ENCODE measurements at regions of chr1 and their contacts with region 1.

Region 1: DNA sequence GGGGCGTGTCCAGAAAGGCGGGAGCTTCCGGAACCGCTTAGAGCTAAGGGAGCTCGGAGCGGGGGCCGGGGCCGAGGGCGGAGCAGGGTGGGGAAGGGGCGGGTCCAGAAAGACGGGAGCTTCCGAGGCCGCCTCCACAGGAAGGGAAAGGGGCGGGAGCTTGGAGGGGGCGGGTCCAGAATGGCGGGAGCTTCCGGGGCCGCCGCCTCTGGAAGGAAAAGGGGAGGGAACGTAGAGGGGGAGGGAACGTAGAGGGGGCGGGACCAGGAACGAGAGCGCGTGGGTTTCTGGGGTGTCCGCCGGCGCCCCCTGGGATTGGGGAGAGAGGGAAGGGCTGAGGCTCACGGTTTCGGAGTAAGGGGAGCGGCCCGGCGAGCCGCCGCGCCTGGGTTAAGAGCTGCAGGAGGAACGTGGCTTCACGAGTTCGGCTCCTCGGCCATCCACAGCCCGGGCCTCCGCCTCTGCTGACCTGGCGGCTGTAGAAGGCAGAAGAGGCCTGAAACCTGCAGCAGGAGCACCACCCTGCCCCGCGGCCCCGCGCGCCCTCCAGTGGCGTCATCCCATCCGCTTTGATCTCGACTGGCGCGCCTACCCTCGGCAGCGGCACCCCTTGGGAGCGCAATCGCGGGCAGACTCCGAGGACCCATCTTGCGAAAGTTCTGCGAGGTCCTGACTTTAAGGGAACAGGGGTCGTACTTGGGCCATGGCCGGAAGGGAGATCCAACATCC is 22.9 kb upstream of the HPDL start:
- DNase-seq: peak; percentile 98
- ATAC-seq: peak; percentile 90
- H3K4me3 ChIP-seq: peak overlapping the region; percentile 73
- H3K27ac ChIP-seq: peak overlapping the region; percentile 71
- H3K4me1 ChIP-seq: peaks cover 22% of the 10 kb centered on the region
- H3K27me3 ChIP-seq: no peaks in the 10 kb centered on the region
- CTCF ChIP-seq: peak; percentile 78

Region 2: DNA sequence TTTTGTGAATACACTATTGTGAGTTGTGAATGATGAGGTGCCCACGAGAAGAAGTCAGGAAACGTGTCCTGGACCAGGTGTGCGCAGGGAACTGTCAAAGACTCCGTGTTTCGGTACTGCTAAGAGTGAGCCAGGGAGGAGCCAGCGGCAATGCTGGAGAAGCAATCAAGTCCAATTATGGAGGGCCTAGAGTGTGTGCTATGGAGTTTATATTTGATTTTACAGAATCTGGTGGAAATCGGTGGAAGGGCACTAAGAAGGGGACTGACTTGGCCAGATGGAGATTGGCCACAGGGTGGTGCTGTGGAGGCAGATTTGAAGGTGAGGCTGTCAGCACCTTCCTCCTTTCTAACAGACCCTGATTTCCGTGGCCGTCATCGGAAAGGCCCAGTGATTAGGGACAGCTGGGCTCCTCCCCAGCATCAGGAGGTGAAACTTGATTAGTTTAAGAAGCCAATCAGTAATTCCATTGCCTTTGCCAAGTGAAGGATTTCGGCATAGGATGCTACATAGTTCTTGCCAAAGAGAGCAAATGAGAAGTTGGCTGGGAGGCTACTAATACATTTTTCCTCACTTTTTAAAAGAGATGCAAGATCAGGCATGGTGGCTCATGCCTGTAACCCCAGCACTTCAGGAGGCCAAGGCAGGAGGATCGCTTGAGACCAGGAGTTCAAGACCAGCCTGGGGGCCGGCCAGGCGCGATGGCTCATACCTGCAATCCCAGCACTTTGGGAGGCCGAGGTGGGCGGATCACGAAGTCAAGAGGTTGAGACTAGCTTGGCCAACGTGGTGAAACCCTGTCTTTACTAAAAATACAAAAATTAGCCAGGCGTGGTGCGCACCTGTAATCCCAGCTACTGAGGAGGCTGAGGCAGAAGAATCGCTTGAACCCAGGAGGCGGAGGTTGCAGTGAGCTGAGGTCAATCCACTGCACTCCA is 467.7 kb before region 1 on chr1:
- CTCF ChIA-PET with region 1: no interaction called
- POLR2A ChIA-PET with region 1: no interaction called
- intact Hi-C with region 1: loop called (anchors 1 kb)
- DNase-seq: peak; percentile 85
- ATAC-seq: peak; percentile 93
- H3K4me3 ChIP-seq: no peak overlapping the region
- H3K27ac ChIP-seq: no peak overlapping the region
- H3K4me1 ChIP-seq: no peaks in the 10 kb centered on the region
- H3K27me3 ChIP-seq: no peaks in the 10 kb centered on the region
- CTCF ChIP-seq: peak; percentile 91

Region 3: GRCh38 chr1:45011837-45012638 is 291.7 kb before region 1 on chr1 and contains the start of gene UROD:
- CTCF ChIA-PET with region 1: interaction called, 28 read pairs
- POLR2A ChIA-PET with region 1: interaction called, 52 read pairs
- intact Hi-C with region 1: loop called (anchors 1 kb)
- DNase-seq: peak; percentile 96
- ATAC-seq: peak; percentile 69
- H3K4me3 ChIP-seq: peak within 1 kb of the TSS; percentile 93
- H3K27ac ChIP-seq: peak within 1 kb of the TSS; percentile 37
- H3K4me1 ChIP-seq: peaks cover 22% of the 10 kb centered on the region
- H3K27me3 ChIP-seq: no peaks in the 10 kb centered on the region
- CTCF ChIP-seq: no peak
- total RNA-seq, gene UROD: 167 and 168 TPM in 2 replicates

Region 4: DNA sequence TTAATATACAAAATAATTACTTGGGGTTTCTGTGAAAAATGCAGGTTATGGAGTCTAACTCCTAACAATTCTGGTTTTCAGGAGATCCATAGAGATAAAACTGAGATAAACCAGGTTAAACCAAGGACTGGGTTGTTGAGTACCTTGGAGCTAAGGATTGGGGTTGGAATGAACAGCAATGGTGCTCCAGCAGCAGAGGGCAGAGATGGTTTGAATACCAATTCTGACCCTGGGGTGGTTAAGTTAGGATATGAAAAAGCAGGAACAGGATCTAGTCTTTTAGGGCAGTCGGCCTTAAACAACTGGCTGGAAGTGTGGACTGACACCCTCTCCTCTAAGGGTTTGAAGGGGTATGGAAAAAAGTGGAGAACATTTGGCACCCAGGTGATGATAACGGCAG is 238.7 kb before region 1 on chr1:
- CTCF ChIA-PET with region 1: interaction called, 13 read pairs
- POLR2A ChIA-PET with region 1: no interaction called
- intact Hi-C with region 1: no loop called
- DNase-seq: no peak
- ATAC-seq: no peak
- H3K4me3 ChIP-seq: no peak overlapping the region
- H3K27ac ChIP-seq: no peak overlapping the region
- H3K4me1 ChIP-seq: no peaks in the 10 kb centered on the region
- H3K27me3 ChIP-seq: no peaks in the 10 kb centered on the region
- CTCF ChIP-seq: no peak

Region 5: GRCh38 chr1:45246760-45247159 is 57.0 kb before region 1 on chr1:
- CTCF ChIA-PET with region 1: no interaction called
- POLR2A ChIA-PET with region 1: no interaction called
- intact Hi-C with region 1: loop called (anchors 5 kb)
- DNase-seq: peak; percentile 95
- ATAC-seq: peak; percentile 98
- H3K4me3 ChIP-seq: no peak overlapping the region
- H3K27ac ChIP-seq: peak overlapping the region; percentile 79
- H3K4me1 ChIP-seq: peaks cover 13% of the 10 kb centered on the region
- H3K27me3 ChIP-seq: no peaks in the 10 kb centered on the region
- CTCF ChIP-seq: no peak

Region 6: GRCh38 chr1:45348716-45349677 is 45.3 kb after region 1 on chr1:
- CTCF ChIA-PET with region 1: no interaction called
- POLR2A ChIA-PET with region 1: interaction called, 19 read pairs
- intact Hi-C with region 1: no loop called
- DNase-seq: no peak
- ATAC-seq: no peak
- H3K4me3 ChIP-seq: no peak overlapping the region
- H3K27ac ChIP-seq: no peak overlapping the region
- H3K4me1 ChIP-seq: peaks cover 13% of the 10 kb centered on the region
- H3K27me3 ChIP-seq: no peaks in the 10 kb centered on the region
- CTCF ChIP-seq: no peak

Region 7: GRCh38 chr1:45490626-45491486 is 187.1 kb after region 1 on chr1 and contains the start of gene TESK2:
- CTCF ChIA-PET with region 1: interaction called, 13 read pairs
- POLR2A ChIA-PET with region 1: interaction called, 17 read pairs
- intact Hi-C with region 1: loop called (anchors 2 kb)
- DNase-seq: peak; percentile 100
- ATAC-seq: peak; percentile 89
- H3K4me3 ChIP-seq: peak within 1 kb of the TSS; percentile 80
- H3K27ac ChIP-seq: no peak within 1 kb of the TSS
- H3K4me1 ChIP-seq: peaks cover 11% of the 10 kb centered on the region
- H3K27me3 ChIP-seq: no peaks in the 10 kb centered on the region
- CTCF ChIP-seq: no peak
- total RNA-seq, gene TESK2: 6.0 and 6.5 TPM in 2 replicates